Activated CD8-positive, alpha-beta memory T cell treated with anti-CD3 and anti-CD28 coated beads, Interleukin-2, amount 10 ng/mL, durations not matched to agents 7 days and 5 days (primary cell): ENCODE measurements at regions of chr2 and their contacts with region 1.

Region 1: GRCh38 chr2:237421542-237422116 is 7.7 kb upstream of the COL6A3 start:
- DNase-seq: peak; percentile 80
- ATAC-seq: peak; percentile 98
- H3K4me3 Mint-ChIP-seq: no peak overlapping the region
- H3K27ac Mint-ChIP-seq: no peak overlapping the region
- H3K4me1 Mint-ChIP-seq: peaks cover 5% of the 10 kb centered on the region
- H3K27me3 Mint-ChIP-seq: peaks cover 5% of the 10 kb centered on the region

Region 2: DNA sequence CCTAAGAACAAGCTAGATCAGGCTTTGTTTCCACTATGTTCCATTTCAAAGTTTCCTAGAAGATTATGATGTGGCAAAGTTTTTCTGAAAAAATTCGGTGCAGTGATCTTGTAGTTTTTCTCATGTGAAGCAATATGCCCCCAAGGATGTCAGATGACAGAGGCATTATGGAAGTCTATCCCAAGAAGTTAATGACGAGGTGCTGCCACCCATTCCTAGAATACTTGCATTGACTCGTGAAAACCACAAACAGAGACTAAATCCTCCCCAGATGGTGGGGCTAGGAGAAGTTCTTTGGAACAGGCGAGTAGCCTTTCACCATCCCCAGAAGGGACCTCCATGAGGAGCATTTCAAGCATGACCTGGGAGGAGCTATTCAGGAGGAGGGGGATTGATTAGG is 376.2 kb before region 1 on chr2:
- CTCF ChIA-PET with region 1: no interaction called
- DNase-seq: no peak
- ATAC-seq: no peak
- H3K4me3 Mint-ChIP-seq: no peak overlapping the region
- H3K27ac Mint-ChIP-seq: no peak overlapping the region
- H3K4me1 Mint-ChIP-seq: no peaks in the 10 kb centered on the region
- H3K27me3 Mint-ChIP-seq: peaks cover 18% of the 10 kb centered on the region

Region 3: DNA sequence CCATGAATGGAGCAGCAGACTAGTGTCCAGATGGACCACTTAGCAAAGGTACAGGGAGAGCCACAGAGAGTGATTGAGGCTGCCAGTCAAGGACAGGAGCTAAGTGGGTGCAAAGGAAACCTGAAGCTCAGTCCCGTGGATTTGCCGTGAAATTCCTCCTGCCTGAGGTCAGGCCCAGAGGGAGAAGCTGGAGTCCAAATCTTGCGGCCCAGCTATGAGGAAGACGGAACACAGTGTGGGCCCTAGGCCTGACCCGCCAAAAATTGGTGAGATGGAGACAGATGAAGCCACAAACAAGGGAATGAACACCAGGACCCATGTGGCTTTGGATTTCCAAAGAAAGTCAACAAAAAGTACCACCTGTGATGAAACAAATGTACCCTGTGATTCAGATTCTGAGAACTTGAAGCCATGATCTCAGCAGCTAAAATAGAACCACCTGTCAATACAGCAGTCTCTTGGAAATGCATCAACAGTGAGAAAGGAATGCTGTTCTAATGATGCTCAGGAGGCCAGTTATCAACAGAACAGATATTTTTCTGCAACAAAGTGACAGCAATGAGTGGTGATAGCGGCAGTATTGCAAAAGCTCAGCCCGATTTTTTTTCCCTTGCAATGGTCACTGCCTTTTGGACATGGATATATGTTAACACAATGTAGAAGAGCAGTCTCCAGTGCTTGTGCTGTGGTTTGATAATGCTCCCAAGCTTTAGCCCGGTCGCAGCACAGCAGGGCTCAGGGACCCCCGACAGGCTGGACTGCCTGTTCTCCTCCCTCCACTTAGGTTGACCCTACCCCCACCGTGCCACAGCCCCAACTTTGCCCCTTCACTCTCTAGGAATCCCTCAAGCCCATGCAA is 18.4 kb before region 1 on chr2:
- CTCF ChIA-PET with region 1: interaction called, 41 read pairs
- DNase-seq: no peak
- ATAC-seq: no peak
- H3K4me3 Mint-ChIP-seq: no peak overlapping the region
- H3K27ac Mint-ChIP-seq: no peak overlapping the region
- H3K4me1 Mint-ChIP-seq: no peaks in the 10 kb centered on the region
- H3K27me3 Mint-ChIP-seq: no peaks in the 10 kb centered on the region

Region 4: GRCh38 chr2:237434866-237435311 is 13.3 kb after region 1 on chr2:
- CTCF ChIA-PET with region 1: interaction called, 80 read pairs
- DNase-seq: peak; percentile 90
- ATAC-seq: peak; percentile 75
- H3K4me3 Mint-ChIP-seq: peak overlapping the region; percentile 30
- H3K27ac Mint-ChIP-seq: peak overlapping the region; percentile 78
- H3K4me1 Mint-ChIP-seq: peaks cover 69% of the 10 kb centered on the region
- H3K27me3 Mint-ChIP-seq: no peaks in the 10 kb centered on the region

Region 5: GRCh38 chr2:237441605-237442274 is 20.1 kb after region 1 on chr2:
- CTCF ChIA-PET with region 1: interaction called, 80 read pairs
- DNase-seq: no peak
- ATAC-seq: no peak
- H3K4me3 Mint-ChIP-seq: no peak overlapping the region
- H3K27ac Mint-ChIP-seq: peak overlapping the region; percentile 73
- H3K4me1 Mint-ChIP-seq: peaks cover 35% of the 10 kb centered on the region
- H3K27me3 Mint-ChIP-seq: no peaks in the 10 kb centered on the region

Region 6: GRCh38 chr2:237474931-237475703 is 53.5 kb after region 1 on chr2:
- CTCF ChIA-PET with region 1: interaction called, 128 read pairs
- DNase-seq: peak; percentile 76
- ATAC-seq: peak; percentile 91
- H3K4me3 Mint-ChIP-seq: peak overlapping the region; percentile 72
- H3K27ac Mint-ChIP-seq: peak overlapping the region; percentile 66
- H3K4me1 Mint-ChIP-seq: peaks cover 8% of the 10 kb centered on the region
- H3K27me3 Mint-ChIP-seq: peaks cover 31% of the 10 kb centered on the region

Region 7: GRCh38 chr2:237572021-237572741 is 150.6 kb after region 1 on chr2:
- CTCF ChIA-PET with region 1: interaction called, 24 read pairs
- DNase-seq: peak; percentile 86
- ATAC-seq: peak; percentile 95
- H3K4me3 Mint-ChIP-seq: no peak overlapping the region
- H3K27ac Mint-ChIP-seq: no peak overlapping the region
- H3K4me1 Mint-ChIP-seq: no peaks in the 10 kb centered on the region
- H3K27me3 Mint-ChIP-seq: peaks cover 8% of the 10 kb centered on the region